Aorta (tissue), 5 donors: ENCODE measurements at regions of chr20 and their contacts with region 1.

Region 1: DNA sequence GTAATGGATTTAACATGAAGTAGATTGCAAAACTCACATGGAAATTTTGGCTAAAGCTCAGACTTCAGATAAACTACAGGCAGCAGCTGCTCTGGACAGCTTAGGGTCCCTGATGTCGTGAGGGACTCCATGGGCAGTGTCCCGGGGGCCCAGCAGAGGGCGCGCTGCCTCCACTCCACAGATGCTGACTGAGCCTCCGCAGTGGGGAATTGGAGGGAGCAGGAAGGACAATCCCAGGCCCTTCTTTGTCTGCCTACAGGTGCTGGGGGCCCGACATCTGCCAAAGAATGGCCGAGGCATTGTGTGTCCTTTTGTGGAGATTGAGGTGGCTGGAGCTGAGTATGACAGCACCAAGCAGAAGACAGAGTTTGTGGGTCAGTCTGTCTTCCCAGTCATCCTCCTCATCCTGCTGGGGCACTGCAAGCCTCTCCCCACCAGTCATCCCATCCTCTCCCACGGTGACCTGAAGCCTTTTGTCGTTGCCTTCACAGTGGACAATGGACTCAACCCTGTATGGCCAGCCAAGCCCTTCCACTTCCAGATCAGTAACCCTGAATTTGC is 35.9 kb downstream of the PLCG1 start:
- DNase-seq: peak; percentile 87 to 95
- ATAC-seq: peak; percentile 92
- H3K4me3 ChIP-seq: no peak overlapping the region
- H3K27ac ChIP-seq: peak overlapping the region; percentile 23 to 87
- H3K4me1 ChIP-seq: peaks cover 5% of the 10 kb centered on the region in 2 donors
- H3K27me3 ChIP-seq: no peaks in the 10 kb centered on the region

Region 2: DNA sequence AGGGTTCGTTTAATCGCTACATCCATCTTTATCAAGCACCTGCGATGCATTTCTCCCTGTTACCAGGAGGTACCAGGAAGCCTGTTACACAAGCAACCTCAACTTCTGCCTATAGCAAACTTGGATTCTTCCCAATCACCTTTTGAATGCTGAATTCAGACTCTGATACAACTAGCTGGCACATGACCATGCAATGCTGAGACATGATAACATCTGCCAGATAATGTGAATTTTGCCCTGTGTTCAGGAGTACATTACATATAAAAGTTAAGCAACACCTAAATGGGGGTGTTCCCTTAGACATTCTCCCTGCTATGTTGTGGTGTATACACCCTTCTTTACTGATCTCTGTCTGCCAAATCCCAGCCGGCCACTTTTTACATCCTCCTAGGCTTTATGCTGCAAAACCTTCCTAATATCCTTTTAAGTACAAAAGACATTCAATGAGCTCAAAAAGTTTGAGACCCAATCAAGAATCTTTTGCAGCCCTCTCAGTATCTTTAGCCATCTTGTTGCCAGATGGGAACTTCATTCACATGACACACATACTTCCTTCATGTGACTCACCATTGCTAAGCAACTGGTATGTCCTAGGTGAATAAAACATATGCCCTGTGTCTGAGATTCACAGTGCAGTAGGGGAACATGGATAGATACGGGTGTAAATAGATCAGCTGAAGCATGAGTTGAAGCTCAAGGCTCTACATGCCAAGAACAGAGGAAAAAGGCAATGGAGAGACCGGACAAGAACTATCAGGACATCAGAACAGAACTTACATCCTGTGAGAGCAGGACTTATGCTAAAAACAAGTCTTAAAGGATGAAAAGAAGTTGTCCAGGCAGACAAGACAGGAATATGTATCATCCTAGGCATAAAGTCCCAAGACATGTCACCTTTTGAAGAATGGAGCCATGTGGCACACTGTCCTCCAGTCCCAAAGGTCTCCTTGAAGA is 60.0 kb after region 1 on chr20:
- intact Hi-C with region 1: loop called (anchors 2 kb)
- DNase-seq: no peak
- ATAC-seq: peak; percentile 54
- H3K4me3 ChIP-seq: no peak overlapping the region
- H3K27ac ChIP-seq: peak overlapping the region; percentile 63 to 99
- H3K4me1 ChIP-seq: peaks cover 0 to 13% of the 10 kb centered on the region in 2 donors
- H3K27me3 ChIP-seq: no peaks in the 10 kb centered on the region

Region 3: DNA sequence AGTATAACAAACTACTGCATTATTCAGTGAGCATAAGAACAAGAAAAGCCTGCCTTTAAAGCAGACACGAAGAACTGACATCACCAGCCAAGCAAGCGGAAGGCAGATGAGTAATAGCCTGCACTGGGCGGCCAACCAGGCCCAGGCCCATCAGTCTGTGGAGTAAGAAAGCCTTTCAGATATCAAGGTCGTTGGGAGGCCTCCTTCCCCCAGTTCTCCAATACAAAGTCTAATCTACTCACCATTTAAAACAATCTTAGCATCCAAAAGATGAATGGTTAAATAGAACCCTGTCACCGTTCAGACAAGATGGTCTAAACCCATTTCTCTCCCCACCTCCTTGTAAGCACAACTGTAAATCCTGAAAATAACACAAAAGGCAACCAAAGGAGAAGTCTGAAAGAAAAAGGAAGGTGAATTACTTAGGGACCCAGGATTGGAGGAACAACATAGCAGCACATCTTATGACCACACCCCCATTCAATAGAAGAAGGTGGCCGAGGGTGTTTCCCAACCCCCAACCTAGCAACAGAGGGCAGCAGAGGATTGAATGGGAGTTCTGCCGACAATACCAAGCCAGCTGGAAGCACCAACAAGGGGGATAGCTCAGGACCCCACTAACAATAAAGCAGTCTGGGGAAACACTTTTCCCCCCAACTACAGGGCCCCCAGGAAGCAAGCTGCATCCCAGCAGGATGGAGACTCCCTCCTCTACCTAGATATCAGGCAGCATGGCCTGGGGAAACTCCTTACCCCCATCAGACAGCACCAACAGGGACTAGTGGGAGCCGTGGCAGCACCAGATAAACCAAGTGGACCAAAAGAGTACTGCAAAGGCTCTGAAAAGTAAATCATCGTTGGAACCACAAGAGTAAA is 76.4 kb after region 1 on chr20:
- intact Hi-C with region 1: loop called in 1 of 2 experiments (anchors 5 kb)
- DNase-seq: peak; percentile 86 to 88
- ATAC-seq: peak; percentile 88
- H3K4me3 ChIP-seq: no peak overlapping the region
- H3K27ac ChIP-seq: peak overlapping the region; percentile 89 to 95
- H3K4me1 ChIP-seq: peaks cover 9 to 19% of the 10 kb centered on the region in 2 donors
- H3K27me3 ChIP-seq: no peaks in the 10 kb centered on the region

Region 4: GRCh38 chr20:41317536-41318270 is 144.5 kb after region 1 on chr20 and contains the start of gene ZHX3:
- intact Hi-C with region 1: loop called in 1 of 2 experiments (anchors 5 kb)
- DNase-seq: peak; percentile 98 to 99
- ATAC-seq: peak; percentile 98
- H3K4me3 ChIP-seq: peak within 1 kb of the TSS; percentile 83 to 96
- H3K27ac ChIP-seq: peak within 1 kb of the TSS; percentile 53 to 99
- H3K4me1 ChIP-seq: peaks cover 3% of the 10 kb centered on the region in 2 donors
- H3K27me3 ChIP-seq: no peaks in the 10 kb centered on the region
- total RNA-seq, gene ZHX3: 50.7 to 98.6 TPM

Region 5: DNA sequence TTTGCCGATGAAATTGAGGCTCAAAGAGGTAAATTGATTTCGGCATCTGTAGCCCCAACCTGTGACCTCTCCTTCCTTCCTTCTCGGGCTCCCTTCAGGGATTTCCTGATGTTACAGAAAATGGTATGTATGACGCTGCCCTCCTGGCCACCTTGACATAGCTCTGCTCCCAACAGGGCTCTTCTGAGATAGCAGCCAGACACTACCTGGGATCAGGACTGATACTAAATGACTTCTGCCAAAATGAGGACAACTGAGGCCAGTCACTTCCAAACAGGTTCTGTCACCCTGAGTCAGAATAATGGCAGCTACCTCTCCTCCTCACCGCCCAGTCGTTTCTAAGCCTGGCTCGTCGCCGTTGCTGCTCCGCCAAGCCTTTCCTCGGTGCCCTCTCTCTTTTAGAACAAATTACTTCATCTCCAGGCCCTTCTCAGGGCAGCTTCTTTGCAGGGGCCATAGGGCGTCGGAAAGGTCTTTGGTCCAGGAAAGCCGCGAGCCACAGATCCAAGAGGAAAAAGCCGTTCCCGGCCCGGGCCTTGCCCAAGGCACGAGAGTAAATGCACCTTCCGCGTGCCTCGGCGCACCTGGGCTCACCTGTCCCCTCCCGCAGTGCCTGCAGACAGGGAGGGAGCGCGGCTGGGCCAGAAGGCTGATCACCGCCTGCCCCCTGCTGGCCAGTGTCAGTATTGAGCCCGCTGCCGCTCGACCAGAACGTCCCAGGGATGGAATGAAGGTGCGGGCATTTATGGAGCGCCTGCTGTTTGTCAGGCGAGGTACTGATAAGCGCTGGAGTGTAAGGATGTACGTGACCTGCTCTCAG is 166.5 kb after region 1 on chr20:
- intact Hi-C with region 1: loop called (anchors 1 to 2 kb)
- DNase-seq: peak; percentile 86 to 95
- ATAC-seq: peak; percentile 92
- H3K4me3 ChIP-seq: peak overlapping the region in 1 of 2 donors; percentile 10
- H3K27ac ChIP-seq: peak overlapping the region in 1 of 2 donors; percentile 55
- H3K4me1 ChIP-seq: no peaks in the 10 kb centered on the region
- H3K27me3 ChIP-seq: no peaks in the 10 kb centered on the region

Region 6: DNA sequence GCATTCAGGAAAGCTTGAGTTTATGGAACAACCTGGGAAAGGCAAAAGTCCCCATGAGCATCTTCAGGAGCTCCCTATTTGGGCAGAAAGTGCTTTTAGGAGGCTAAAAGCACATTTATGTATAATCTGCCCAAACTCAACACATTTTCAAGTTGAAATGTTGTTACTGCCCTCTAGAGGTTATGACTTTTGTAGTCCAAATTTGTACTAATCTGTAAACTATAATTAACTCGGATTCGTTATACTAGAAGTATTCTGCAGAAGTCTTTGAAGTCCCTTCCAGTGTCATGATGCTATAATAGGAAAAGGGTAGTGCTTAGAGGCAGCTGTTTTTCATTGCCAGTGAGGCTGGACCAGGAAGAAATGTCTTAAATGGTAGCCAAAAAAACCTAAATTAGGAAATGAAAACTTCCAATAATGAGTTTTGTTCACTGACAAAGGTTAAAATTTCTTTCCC is 238.2 kb after region 1 on chr20:
- intact Hi-C with region 1: loop called (anchors 5 to 10 kb)
- DNase-seq: no peak
- ATAC-seq: peak; percentile 65
- H3K4me3 ChIP-seq: no peak overlapping the region
- H3K27ac ChIP-seq: peak overlapping the region in 1 of 2 donors; percentile 91
- H3K4me1 ChIP-seq: no peaks in the 10 kb centered on the region
- H3K27me3 ChIP-seq: no peaks in the 10 kb centered on the region